HAP-1 (cell line): ENCODE measurements at regions of chr7 and their contacts with region 1.

Region 1: DNA sequence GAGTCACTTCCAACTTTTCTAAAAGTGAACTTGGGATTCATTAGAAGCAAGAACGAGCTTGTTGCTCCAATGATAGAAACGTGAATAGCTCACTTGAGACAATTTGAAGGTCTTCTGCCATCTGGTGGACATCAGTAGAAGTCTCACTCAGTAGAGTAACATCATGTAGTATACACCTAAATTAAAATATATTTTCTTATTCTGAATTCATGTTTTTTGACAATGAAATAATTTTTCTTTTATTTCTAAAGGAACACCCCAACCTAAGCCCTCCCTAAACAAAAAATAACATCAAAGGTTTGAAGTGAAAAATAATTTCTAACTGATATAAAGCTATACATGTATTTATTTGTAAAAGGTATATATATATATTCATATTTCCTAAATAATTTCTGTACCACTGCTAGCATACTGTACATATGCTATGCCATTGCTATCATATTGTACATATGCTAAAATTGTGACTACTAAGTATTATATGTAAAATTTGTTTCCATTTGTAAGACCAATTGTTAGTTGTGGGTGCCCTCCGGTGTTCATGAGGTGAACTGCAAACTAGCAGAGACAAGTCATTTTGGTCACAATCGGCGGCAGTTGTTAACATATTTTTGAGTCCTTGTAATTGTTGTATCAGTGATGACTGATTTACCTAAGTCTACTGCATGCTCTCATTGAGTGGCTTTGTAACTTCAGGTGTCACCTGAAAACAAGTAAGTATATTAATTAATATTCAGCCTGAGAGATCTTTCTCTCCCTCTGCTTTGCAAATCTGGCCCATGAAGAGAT is 121.9 kb downstream of the PTPRZ1 start:
- DNase-seq: peak; percentile 60 to 78
- H3K4me3 ChIP-seq: no peak overlapping the region
- H3K4me1 ChIP-seq: no peaks in the 10 kb centered on the region
- H3K27me3 ChIP-seq: peaks cover 6% of the 10 kb centered on the region

Region 2: GRCh38 chr7:121138262-121138933 is 856.4 kb before region 1 on chr7:
- in situ Hi-C with region 1: loop called (anchors 25 kb)
- DNase-seq: no peak
- H3K4me3 ChIP-seq: no peak overlapping the region
- H3K4me1 ChIP-seq: peaks cover 2% of the 10 kb centered on the region; the same call in 1 of the 2 replicates
- H3K27me3 ChIP-seq: no peaks in the 10 kb centered on the region; the same call in 1 of the 2 replicates

Region 3: GRCh38 chr7:121366852-121367431 is 627.9 kb before region 1 on chr7:
- in situ Hi-C with region 1: loop called (anchors 25 kb)
- DNase-seq: peak; percentile 25 to 44
- H3K4me3 ChIP-seq: no peak overlapping the region
- H3K4me1 ChIP-seq: peaks cover 10% of the 10 kb centered on the region
- H3K27me3 ChIP-seq: no peaks in the 10 kb centered on the region

Region 4: GRCh38 chr7:121563177-121563576 is 431.6 kb before region 1 on chr7:
- in situ Hi-C with region 1: loop called (anchors 25 kb)
- DNase-seq: peak in 1 of 2 experiments; percentile 20
- H3K4me3 ChIP-seq: no peak overlapping the region
- H3K4me1 ChIP-seq: no peaks in the 10 kb centered on the region
- H3K27me3 ChIP-seq: no peaks in the 10 kb centered on the region